Left cardiac atrium (tissue), 4 donors: ENCODE measurements at regions of chr1 and their contacts with region 1.

Region 1: DNA sequence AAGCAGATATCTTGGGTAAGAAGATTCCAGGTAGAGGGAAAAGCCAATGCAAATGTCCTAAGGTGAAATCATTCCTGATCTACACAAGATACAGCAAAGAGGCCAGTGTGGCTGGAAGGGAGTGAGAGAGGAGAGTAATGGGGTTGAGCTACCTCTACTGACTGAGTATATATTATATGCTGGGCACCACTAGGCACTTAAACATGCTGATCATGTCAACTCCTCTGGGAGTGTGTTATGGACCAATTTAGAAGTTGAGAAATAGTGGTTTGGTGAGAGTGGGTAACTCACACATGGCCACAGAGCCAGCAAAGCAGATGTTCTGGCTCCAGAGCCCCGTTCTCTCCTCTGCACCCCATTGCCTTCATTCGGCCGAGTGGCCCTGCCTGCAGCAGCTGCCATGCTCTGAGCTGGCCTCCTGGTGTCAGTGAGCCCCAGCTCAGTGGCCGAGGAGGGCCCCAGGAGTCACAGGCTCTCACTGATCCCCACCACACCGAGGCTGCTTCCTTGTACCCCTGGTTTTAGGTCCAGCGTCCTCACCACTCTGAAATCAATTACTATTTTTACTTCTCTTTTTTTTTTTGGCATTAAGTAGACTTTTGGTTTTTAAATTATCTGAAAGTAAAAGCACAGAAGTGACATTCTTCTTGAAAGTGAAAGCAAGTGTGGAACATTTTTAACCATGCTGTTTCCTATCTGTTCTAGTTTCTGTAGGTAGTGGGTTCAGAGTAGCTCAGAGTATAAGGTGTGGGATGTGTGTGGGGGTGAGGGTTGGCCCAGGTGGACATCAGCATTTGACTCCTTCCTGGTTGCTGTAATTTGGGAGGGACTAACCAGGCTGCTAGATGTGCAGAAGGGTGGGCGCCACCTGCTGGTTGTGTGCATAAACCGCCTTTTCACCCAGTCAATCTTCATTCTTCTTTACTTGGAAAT is 45.8 kb upstream of the CRNN start:
- DNase-seq: peak; percentile 80
- ATAC-seq: peak in 1 of 2 donors; percentile 79

Region 2: DNA sequence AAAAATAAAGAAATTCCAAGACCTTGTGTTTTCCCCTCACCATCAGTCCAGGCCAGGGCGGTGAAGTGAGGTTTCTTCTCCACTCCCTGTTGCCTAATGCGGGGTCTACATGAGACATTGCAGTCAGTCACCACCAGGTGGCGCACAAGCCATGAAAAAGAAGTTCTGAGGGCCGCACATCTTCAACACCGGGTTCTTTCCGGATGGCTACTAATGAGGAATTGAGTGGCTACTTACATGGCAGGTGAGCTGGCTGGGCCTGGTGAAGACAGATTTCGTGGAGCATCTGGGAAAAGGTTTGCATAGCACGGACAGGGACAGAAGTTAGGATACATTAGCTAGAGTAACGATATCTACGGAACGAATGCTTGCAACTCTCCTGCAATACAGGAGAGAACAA is 407.3 kb before region 1 on chr1:
- intact Hi-C with region 1: loop called in 1 of 2 experiments (anchors 5 kb)
- DNase-seq: peak; percentile 86
- ATAC-seq: peak in 1 of 2 donors; percentile 26

Region 3: GRCh38 chr1:152141974-152142584 is 317.8 kb before region 1 on chr1:
- intact Hi-C with region 1: loop called in 1 of 2 experiments (anchors 5 kb)
- DNase-seq: peak; percentile 65
- ATAC-seq: peak in 1 of 2 donors; percentile 69

Region 4: DNA sequence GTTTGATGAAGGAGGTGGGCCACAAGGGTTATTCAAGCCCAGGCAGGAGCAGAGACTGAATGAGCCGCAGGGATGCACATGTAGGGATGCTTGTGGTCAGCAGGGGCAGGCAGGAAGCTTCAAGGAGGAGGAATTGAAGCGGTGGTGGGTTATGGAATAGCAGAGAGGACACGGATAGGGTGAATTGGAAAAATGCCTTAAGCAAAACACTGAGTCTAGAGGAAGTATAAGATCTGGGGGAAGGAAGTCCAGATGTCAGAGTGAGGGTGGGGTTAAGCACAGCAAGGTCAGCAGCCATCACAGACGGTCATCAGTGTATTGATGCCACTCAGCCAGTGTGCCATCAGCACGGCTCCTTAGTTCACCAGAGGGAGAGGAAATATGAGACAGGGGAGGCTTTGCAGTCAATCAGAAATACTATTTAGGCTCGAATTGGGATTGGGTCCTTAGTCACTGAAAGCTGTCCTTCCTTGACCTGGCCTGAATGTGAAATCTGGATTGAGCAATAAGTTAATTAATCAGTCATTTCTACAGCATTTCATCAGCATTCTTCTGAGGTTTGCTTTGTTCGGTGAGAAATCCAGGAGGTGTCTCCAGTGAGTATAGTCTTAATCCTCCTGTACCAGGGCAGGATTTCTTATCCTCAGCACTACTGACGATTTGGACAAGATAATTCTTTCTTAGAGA is 309.1 kb after region 1 on chr1:
- intact Hi-C with region 1: no loop called
- DNase-seq: no peak
- ATAC-seq: no peak

Region 5: GRCh38 chr1:152801333-152801732 is 341.5 kb after region 1 on chr1:
- intact Hi-C with region 1: no loop called
- DNase-seq: no peak
- ATAC-seq: no peak